ENCODE measurements at regions of chr11 and their contacts with region 1.

Region 1: DNA sequence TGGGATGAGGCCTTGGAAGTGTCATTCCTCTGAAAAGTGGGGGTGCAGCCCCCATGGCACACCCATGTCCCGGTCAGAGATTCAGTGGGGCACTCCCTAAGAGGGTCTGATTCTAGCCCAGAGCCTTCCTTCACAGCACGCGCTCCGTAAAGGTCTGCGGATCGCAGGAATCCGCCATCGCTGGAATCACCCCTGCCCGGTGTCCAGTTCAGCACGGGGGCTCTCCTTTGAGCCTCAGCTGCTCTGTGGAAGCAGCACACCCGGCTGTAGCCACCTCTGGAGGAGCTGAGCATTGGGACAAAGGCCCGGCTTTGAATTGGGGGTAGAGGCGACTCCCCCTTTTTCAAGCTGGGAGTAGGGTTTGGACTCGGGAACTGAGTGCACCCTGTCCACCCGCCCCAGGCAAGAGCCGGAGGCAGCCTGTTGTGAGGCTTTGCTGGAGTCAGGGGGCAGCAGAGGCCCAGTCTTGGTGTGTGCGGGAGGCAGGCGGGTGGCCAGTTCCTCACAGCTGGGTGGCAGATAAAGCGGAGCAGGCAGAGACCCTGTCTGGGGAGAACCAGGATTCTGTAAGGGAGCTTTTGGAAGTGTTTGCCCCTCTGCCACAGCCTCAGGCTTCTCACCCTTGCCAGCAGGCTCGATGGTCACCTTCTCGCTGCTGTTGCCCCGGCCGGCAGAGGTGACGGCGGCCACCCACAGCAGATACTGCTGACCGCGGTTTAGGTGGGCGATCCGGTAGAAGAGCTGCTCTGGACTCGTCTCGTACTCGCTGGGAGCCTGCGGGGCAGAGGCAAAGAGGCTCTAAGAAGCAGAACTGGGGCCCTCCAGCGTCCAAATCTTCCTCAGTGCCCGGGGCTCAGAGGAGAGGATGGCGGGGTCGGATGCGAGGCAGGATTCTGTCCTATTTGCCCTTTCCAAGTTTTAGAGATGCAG is 115.9 kb downstream of the CEP164 start:
- DNase-seq: peak; percentile 67 to 88 (median 87)
- ATAC-seq: peak; percentile 85 to 86
- H3K4me3 ChIP-seq: no peak overlapping the region
- H3K27ac ChIP-seq: no peak overlapping the region
- H3K4me1 ChIP-seq: no peaks in the 10 kb centered on the region
- H3K27me3 ChIP-seq: no peaks in the 10 kb centered on the region

Region 2: GRCh38 chr11:117249571-117249970 is 194.0 kb before region 1 on chr11:
- intact Hi-C with region 1: no loop called
- DNase-seq: no peak
- ATAC-seq: no peak
- H3K4me3 ChIP-seq: no peak overlapping the region
- H3K27ac ChIP-seq: no peak overlapping the region
- H3K4me1 ChIP-seq: no peaks in the 10 kb centered on the region
- H3K27me3 ChIP-seq: no peaks in the 10 kb centered on the region

Region 3: GRCh38 chr11:117290809-117291396 is 152.6 kb before region 1 on chr11 and contains the start of gene BACE1-AS:
- intact Hi-C with region 1: no loop called
- DNase-seq: no peak
- ATAC-seq: no peak
- H3K4me3 ChIP-seq: no peak within 1 kb of the TSS
- H3K27ac ChIP-seq: no peak within 1 kb of the TSS
- H3K4me1 ChIP-seq: no peaks in the 10 kb centered on the region
- H3K27me3 ChIP-seq: no peaks in the 10 kb centered on the region
- total RNA-seq, gene BACE1-AS: 7.0 to 10.5 (median 8.2) TPM

Region 4: GRCh38 chr11:117807482-117808327 is 364.2 kb after region 1 on chr11:
- intact Hi-C with region 1: loop called (anchors 5 kb)
- DNase-seq: peak; percentile 78 to 95 (median 90)
- ATAC-seq: peak; percentile 53 to 60
- H3K4me3 ChIP-seq: no peak overlapping the region
- H3K27ac ChIP-seq: no peak overlapping the region
- H3K4me1 ChIP-seq: no peaks in the 10 kb centered on the region
- H3K27me3 ChIP-seq: no peaks in the 10 kb centered on the region

Measured in right cardiac atrium (tissue), 5 donors.